ENCODE measurements at regions of chr19 and their contacts with region 1.

Region 1: GRCh38 chr19:41397086-41398049 is at the starts of genes BCKDHA and EXOSC5:
- DNase-seq: peak; percentile 99
- H3K4me3 Mint-ChIP-seq: peak within 1 kb of the TSS; percentile 97
- H3K27ac Mint-ChIP-seq: peak within 1 kb of the TSS; percentile 99
- H3K4me1 Mint-ChIP-seq: peaks cover 28% of the 10 kb centered on the region
- H3K27me3 Mint-ChIP-seq: no peaks in the 10 kb centered on the region
- total RNA-seq, gene BCKDHA: 14.6 and 22.7 TPM in 2 replicates
- total RNA-seq, gene EXOSC5: 59.3 and 66.6 TPM in 2 replicates

Region 2: GRCh38 chr19:40217027-40217810 is 1180.1 kb before region 1 on chr19:
- intact Hi-C with region 1: no loop called
- DNase-seq: no peak
- H3K4me3 Mint-ChIP-seq: no peak overlapping the region
- H3K27ac Mint-ChIP-seq: no peak overlapping the region
- H3K4me1 Mint-ChIP-seq: peaks cover 15% of the 10 kb centered on the region
- H3K27me3 Mint-ChIP-seq: peaks cover 37% of the 10 kb centered on the region

Region 3: GRCh38 chr19:41269055-41269454 is 128.3 kb before region 1 on chr19:
- intact Hi-C with region 1: no loop called
- DNase-seq: no peak
- H3K4me3 Mint-ChIP-seq: no peak overlapping the region
- H3K27ac Mint-ChIP-seq: no peak overlapping the region
- H3K4me1 Mint-ChIP-seq: peaks cover 32% of the 10 kb centered on the region
- H3K27me3 Mint-ChIP-seq: no peaks in the 10 kb centered on the region

Region 4: DNA sequence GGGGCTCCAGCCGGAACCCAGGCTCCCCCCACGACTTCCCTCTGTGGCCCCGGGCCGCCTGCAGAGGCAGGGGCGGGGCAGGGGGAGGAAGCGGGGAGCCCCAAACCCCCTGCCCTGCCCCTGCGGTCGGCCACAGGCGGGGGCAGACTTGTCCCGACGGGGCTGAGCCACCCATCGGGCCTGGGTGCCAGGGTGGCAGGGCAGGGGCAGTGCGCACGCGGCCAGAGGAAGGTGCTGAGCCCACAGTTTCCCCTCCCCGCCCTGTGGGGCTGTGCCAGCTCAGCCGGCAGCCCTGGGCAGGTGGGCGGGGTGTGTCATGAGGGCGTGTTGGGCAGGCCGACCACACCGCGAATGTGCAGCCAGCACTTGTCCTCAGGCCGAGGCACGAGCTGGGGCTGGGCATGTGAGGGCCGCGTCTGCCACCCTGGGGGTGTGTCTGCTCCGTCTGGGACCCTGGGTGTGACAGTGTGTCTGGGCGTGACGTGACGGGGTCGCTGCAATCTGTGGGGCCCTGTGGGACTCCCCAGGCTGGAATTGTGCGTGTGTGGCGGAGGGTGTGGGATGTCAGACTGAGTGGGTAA is 69.7 kb before region 1 on chr19:
- intact Hi-C with region 1: loop called (anchors 1 kb)
- DNase-seq: peak; percentile 67
- H3K4me3 Mint-ChIP-seq: peak overlapping the region; percentile 76
- H3K27ac Mint-ChIP-seq: peak overlapping the region; percentile 95
- H3K4me1 Mint-ChIP-seq: peaks cover 59% of the 10 kb centered on the region
- H3K27me3 Mint-ChIP-seq: no peaks in the 10 kb centered on the region

Region 5: DNA sequence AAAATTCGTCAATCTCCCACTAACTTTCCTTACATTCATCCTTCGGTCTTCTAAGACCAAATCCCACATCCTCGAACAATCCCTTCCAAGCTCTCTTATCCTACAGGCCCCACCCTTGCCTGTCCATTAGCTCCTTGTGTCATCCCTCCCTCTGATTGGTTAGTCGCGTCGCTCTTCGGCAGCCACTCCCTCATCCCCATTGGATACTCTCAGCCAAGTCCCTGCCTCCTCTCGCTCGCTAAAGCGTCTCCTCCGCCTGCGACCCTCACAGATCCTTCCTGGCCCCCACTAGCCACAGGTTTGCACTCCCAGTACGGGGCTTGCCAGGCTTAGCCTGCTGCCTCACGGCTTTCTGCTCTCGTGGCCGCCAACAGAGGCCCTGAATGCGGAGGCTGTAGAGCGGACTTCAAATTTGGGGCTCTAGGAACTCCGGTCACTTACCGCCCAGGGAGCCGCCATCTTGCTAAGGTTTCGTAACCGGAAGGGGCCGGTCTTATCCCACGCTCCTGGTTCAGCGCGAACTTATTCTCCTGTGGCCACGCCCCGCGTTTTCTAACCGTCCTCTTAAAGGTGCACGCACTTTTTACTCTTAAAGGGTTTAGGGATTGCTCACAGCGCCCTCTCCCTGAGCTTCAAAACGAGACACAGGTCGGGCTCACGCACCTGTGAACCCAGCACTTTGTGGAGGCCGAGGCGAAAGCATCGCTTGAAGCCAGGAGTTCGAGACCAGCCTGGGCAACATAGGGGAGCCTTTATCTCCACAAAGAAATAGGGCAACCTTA is 42.3 kb after region 1 on chr19 and contains the start of gene DMAC2:
- intact Hi-C with region 1: loop called (anchors 1 kb)
- DNase-seq: peak; percentile 93
- H3K4me3 Mint-ChIP-seq: no peak within 1 kb of the TSS
- H3K27ac Mint-ChIP-seq: no peak within 1 kb of the TSS
- H3K4me1 Mint-ChIP-seq: peaks cover 5% of the 10 kb centered on the region
- H3K27me3 Mint-ChIP-seq: peaks cover 5% of the 10 kb centered on the region
- total RNA-seq, gene DMAC2: 56.7 and 57.3 TPM in 2 replicates

Region 6: GRCh38 chr19:41570639-41571112 is 173.3 kb after region 1 on chr19:
- intact Hi-C with region 1: loop called (anchors 2 kb)
- DNase-seq: peak; percentile 76
- H3K4me3 Mint-ChIP-seq: no peak overlapping the region
- H3K27ac Mint-ChIP-seq: peak overlapping the region; percentile 27
- H3K4me1 Mint-ChIP-seq: peaks cover 27% of the 10 kb centered on the region
- H3K27me3 Mint-ChIP-seq: no peaks in the 10 kb centered on the region

Region 7: DNA sequence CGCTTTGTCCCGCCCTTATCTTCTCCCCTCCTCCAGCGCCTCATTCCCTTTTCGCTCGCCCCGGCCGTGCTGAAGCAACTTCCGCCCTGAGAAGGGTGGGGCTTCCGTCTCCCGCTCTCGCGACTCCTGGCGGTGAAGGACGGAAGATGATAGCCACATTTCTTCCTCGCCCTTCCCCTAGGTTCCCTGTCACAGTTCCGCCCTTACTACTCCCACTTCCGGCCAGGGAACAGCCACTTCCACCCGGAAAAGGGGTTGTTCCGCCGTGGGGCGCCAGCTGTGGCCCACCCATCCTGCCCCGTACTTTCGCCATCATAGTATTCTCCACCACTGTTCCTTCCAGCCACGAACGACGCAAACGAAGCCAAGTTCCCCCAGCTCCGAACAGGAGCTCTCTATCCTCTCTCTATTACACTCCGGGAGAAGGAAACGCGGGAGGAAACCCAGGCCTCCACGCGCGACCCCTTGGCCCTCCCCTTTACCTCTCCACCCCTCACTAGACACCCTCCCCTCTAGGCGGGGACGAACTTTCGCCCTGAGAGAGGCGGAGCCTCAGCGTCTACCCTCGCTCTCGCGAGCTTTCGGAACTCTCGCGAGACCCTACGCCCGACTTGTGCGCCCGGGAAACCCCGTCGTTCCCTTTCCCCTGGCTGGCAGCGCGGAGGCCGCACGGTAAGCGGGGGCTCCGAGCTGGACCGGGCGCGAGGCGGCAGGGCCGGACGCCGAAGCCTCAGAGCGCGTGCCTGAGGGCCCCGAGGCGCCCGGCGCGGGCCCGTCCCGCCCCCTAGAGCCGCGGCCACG is 462.4 kb after region 1 on chr19 and contains the start of gene RPS19:
- intact Hi-C with region 1: loop called (anchors 2 kb)
- DNase-seq: peak; percentile 97
- H3K4me3 Mint-ChIP-seq: peak within 1 kb of the TSS; percentile 95
- H3K27ac Mint-ChIP-seq: peak within 1 kb of the TSS; percentile 97
- H3K4me1 Mint-ChIP-seq: peaks cover 39% of the 10 kb centered on the region
- H3K27me3 Mint-ChIP-seq: peaks cover 9% of the 10 kb centered on the region
- total RNA-seq, gene RPS19: 2,887 and 2,906 TPM in 2 replicates

Measured in activated T-helper 1 cell treated with anti-CD3 and anti-CD28 coated beads, Interleukin-12 subunit alpha, Interleukin-12 subunit beta, Interleukin-2, Interleukin-4 antibody, amounts not matched to agents 30 ng/mL and 10 ng/mL and 1 ng/mL, durations not matched to agents 14 hours and 24 hours and 36 hours (primary cell).